ENCODE measurements at regions of chr5 and their contacts with region 1.

Region 1: GRCh38 chr5:174327317-174328236 is 282.1 kb downstream of the NSG2 start:
- DNase-seq: peak in 1 of 2 donors; percentile 53
- H3K4me3 ChIP-seq: no peak overlapping the region
- H3K27ac ChIP-seq: no peak overlapping the region
- H3K4me1 ChIP-seq: no peaks in the 10 kb centered on the region
- H3K27me3 ChIP-seq: no peaks in the 10 kb centered on the region
- CTCF ChIP-seq: peak; percentile 32 to 70 (median 57)

Region 2: GRCh38 chr5:174204535-174205313 is 122.9 kb before region 1 on chr5:
- intact Hi-C with region 1: no loop called
- DNase-seq: peak in 1 of 2 donors; percentile 28
- H3K4me3 ChIP-seq: no peak overlapping the region
- H3K27ac ChIP-seq: no peak overlapping the region
- H3K4me1 ChIP-seq: no peaks in the 10 kb centered on the region
- H3K27me3 ChIP-seq: no peaks in the 10 kb centered on the region
- CTCF ChIP-seq: no peak

Region 3: GRCh38 chr5:174229514-174230370 is 97.8 kb before region 1 on chr5:
- intact Hi-C with region 1: no loop called
- DNase-seq: no peak
- H3K4me3 ChIP-seq: no peak overlapping the region
- H3K27ac ChIP-seq: no peak overlapping the region
- H3K4me1 ChIP-seq: no peaks in the 10 kb centered on the region
- H3K27me3 ChIP-seq: no peaks in the 10 kb centered on the region
- CTCF ChIP-seq: no peak

Region 4: DNA sequence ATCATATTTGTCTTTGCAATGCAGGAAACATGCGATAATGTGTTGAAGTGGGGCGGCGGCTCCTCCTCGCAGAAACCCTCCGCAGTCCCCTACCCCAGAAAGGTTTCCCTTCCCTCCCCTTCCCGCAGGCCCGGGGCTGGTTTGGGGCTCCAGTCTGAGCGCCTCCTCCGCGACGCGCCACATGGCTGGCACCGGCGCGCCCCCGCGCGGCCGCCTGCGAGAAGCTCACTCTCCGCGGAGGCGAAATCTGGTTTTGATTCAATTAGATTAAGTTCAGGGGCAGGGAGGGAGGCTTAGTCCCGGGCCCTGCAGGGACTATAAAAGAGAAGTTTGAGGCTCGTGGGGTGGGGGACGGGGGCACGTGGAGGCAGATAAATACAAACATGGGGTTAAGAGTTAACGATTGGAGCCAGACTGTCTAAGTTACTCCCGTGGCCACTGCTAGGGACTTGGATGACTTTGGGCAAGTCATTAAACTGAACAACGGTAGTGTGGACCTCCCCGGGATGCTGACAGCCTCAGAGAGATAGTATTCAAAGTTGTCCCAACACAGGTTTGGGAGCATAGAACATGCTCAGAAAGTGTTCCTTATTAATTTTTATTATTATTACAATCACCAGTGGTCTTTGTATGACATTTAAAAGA is 466.2 kb after region 1 on chr5:
- intact Hi-C with region 1: loop called (anchors 5 kb)
- DNase-seq: peak in 1 of 2 donors; percentile 61
- H3K4me3 ChIP-seq: no peak overlapping the region
- H3K27ac ChIP-seq: no peak overlapping the region
- H3K4me1 ChIP-seq: no peaks in the 10 kb centered on the region
- H3K27me3 ChIP-seq: no peaks in the 10 kb centered on the region
- CTCF ChIP-seq: peak; percentile 65 to 92 (median 83)